GM12878 (cell line): ENCODE measurements at regions of chr11 and their contacts with region 1.

Region 1: DNA sequence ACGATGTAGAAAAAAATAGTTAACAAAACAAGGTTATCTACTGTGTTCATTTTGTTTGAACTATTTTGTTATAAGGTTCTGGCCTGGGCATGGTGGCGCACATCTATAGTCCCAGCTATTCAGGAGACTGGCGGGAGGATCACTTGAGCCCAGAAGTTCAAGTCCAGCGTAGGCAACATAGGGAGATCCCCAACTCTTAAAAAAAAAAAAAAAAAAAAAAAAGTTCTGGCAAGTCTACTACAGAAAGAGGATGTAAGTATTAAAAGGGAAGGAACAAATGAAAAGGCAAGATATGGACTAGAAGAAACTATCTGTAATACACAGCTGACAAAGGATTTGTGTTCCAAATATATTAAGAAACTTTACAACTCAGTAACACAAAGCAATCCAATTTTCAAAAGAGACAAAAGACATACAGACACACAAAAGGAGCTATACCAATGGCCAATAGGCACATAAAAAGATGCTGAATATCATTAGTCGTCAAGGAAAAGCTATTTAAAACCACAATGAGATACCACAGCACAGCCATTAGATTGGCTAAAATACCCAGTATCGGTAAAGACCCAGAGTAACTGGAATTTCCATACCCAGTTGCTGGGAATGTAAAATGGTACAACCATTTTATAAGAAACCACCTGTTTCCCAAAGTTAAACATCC is 27.4 kb downstream of the RRAS2 start:
- DNase-seq: no peak
- ATAC-seq: peak; percentile 77
- H3K4me3 ChIP-seq: peak overlapping the region; percentile 32; the same call in 1 of the 2 replicates
- H3K27ac ChIP-seq: peak overlapping the region; percentile 29; the same call in 1 of the 2 replicates
- H3K4me1 ChIP-seq: peaks cover 43% of the 10 kb centered on the region
- H3K27me3 ChIP-seq: no peaks in the 10 kb centered on the region
- CTCF ChIP-seq: no peak
- EP300 ChIP-seq: no peak
- POLR2A ChIP-seq: no peak
- RAD21 ChIP-seq: no peak

Region 2: GRCh38 chr11:13970986-13971385 is 360.6 kb before region 1 on chr11:
- CTCF ChIA-PET with region 1: no interaction called
- POLR2A ChIA-PET with region 1: interaction called, 10 read pairs
- RAD21 ChIA-PET with region 1: no interaction called
- SMC1A ChIA-PET with region 1: no interaction called
- in situ Hi-C with region 1: no loop called
- intact Hi-C with region 1: no loop called
- DNase-seq: no peak
- ATAC-seq: peak; percentile 65
- H3K4me3 ChIP-seq: no peak overlapping the region
- H3K27ac ChIP-seq: no peak overlapping the region
- H3K4me1 ChIP-seq: no peaks in the 10 kb centered on the region
- H3K27me3 ChIP-seq: peaks cover 1 to 4% of the 10 kb centered on the region in 2 experiments; a peak in 1 of 4 replicates
- CTCF ChIP-seq: peak; percentile 15 to 47 (median 30); a peak in 3 of 6 replicates
- EP300 ChIP-seq: no peak
- POLR2A ChIP-seq: no peak
- RAD21 ChIP-seq: 0 out of 2 replicates have a peak, but pooled peaks have one; percentile 19

Region 3: GRCh38 chr11:14202251-14203196 is 129.1 kb before region 1 on chr11:
- CTCF ChIA-PET with region 1: no interaction called
- POLR2A ChIA-PET with region 1: no interaction called
- RAD21 ChIA-PET with region 1: no interaction called
- SMC1A ChIA-PET with region 1: no interaction called
- in situ Hi-C with region 1: no loop called
- intact Hi-C with region 1: no loop called
- DNase-seq: peak; percentile 2
- ATAC-seq: peak; percentile 72
- H3K4me3 ChIP-seq: no peak overlapping the region
- H3K27ac ChIP-seq: no peak overlapping the region
- H3K4me1 ChIP-seq: peaks cover 3% of the 10 kb centered on the region; the same call in 1 of the 2 replicates
- H3K27me3 ChIP-seq: no peaks in the 10 kb centered on the region
- CTCF ChIP-seq: no peak
- EP300 ChIP-seq: no peak
- POLR2A ChIP-seq: no peak
- RAD21 ChIP-seq: no peak

Region 4: GRCh38 chr11:14320020-14320419 is 11.6 kb before region 1 on chr11:
- CTCF ChIA-PET with region 1: interaction called, 7 read pairs
- POLR2A ChIA-PET with region 1: interaction called, 5 read pairs
- RAD21 ChIA-PET with region 1: interaction called, 34 read pairs
- SMC1A ChIA-PET with region 1: interaction called, 89 read pairs
- in situ Hi-C with region 1: no loop called
- intact Hi-C with region 1: no loop called
- DNase-seq: peak; percentile 90
- ATAC-seq: peak; percentile 40
- H3K4me3 ChIP-seq: peak overlapping the region; percentile 57
- H3K27ac ChIP-seq: peak overlapping the region; percentile 69
- H3K4me1 ChIP-seq: peaks cover 30% of the 10 kb centered on the region
- H3K27me3 ChIP-seq: no peaks in the 10 kb centered on the region
- CTCF ChIP-seq: no peak
- EP300 ChIP-seq: peak in 1 of 2 experiments; percentile 58; a peak in 1 of 4 replicates
- POLR2A ChIP-seq: no peak
- RAD21 ChIP-seq: no peak

Region 5: GRCh38 chr11:14342906-14343305 is 11.3 kb after region 1 on chr11:
- CTCF ChIA-PET with region 1: interaction called, 9 read pairs
- POLR2A ChIA-PET with region 1: interaction called, 15 read pairs
- RAD21 ChIA-PET with region 1: interaction called, 5 read pairs
- SMC1A ChIA-PET with region 1: interaction called, 43 read pairs
- in situ Hi-C with region 1: no loop called
- intact Hi-C with region 1: no loop called
- DNase-seq: no peak
- ATAC-seq: peak; percentile 70
- H3K4me3 ChIP-seq: no peak overlapping the region
- H3K27ac ChIP-seq: peak overlapping the region; percentile 46; the same call in 1 of the 2 replicates
- H3K4me1 ChIP-seq: peaks cover 3% of the 10 kb centered on the region; the same call in 1 of the 2 replicates
- H3K27me3 ChIP-seq: no peaks in the 10 kb centered on the region
- CTCF ChIP-seq: no peak
- EP300 ChIP-seq: no peak
- POLR2A ChIP-seq: no peak
- RAD21 ChIP-seq: no peak

Region 6: DNA sequence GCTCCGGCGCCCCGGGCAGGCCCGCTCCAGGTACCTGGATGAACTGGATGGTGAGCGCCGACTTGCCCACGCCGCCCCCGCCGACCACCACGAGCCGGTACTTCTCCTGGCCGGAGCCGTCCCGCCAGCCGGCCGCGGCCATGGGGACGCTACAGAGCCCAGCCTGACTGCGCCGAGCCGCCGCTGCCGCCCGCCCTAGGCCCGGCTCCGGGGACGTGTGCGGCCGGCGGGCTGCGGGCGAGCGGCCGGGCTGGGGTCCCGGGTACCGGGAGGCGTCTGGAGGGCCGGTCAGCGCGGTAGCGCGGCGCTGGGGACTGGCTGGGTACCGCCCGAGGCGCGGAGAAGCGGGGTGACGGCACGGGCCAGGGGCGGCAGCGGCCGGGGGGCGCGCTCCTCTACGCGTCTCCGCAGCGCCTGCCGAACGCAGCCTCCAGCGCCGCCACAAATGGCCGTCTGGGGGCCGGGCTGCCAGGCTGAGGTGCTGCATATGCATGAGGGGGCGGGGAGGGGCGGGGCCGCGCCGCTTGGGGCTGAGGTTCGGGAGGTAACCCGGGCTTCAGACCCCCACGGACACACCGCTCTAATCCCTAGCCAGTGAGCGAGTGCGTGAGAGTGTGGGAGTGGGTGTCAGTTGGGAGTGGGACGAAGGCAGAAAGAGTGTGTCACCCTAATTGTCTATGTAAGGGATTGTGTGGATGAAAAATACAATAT is 27.3 kb after region 1 on chr11 and contains the start of gene RRAS2:
- CTCF ChIA-PET with region 1: interaction called, 3 read pairs
- POLR2A ChIA-PET with region 1: interaction called, 6 read pairs
- RAD21 ChIA-PET with region 1: interaction called, 6 read pairs
- SMC1A ChIA-PET with region 1: interaction called, 9 read pairs
- in situ Hi-C with region 1: no loop called
- intact Hi-C with region 1: loop called (anchors 2 kb)
- DNase-seq: no peak
- ATAC-seq: peak; percentile 88
- H3K4me3 ChIP-seq: peak within 1 kb of the TSS; percentile 90
- H3K27ac ChIP-seq: peak within 1 kb of the TSS; percentile 86
- H3K4me1 ChIP-seq: peaks cover 4% of the 10 kb centered on the region; the same call in 1 of the 2 replicates
- H3K27me3 ChIP-seq: no peaks in the 10 kb centered on the region
- CTCF ChIP-seq: 0 out of 6 replicates have a peak, but pooled peaks of 2 of the 3 experiments have one; percentile 6 to 11
- EP300 ChIP-seq: no peak
- POLR2A ChIP-seq: peak; percentile 92
- RAD21 ChIP-seq: 0 out of 2 replicates have a peak, but pooled peaks have one; percentile 14
- polyA plus RNA-seq, gene RRAS2: 26.9 to 33.3 TPM

Region 7: GRCh38 chr11:14506532-14506931 is 174.9 kb after region 1 on chr11:
- CTCF ChIA-PET with region 1: no interaction called
- POLR2A ChIA-PET with region 1: no interaction called
- RAD21 ChIA-PET with region 1: no interaction called
- SMC1A ChIA-PET with region 1: no interaction called
- in situ Hi-C with region 1: no loop called
- intact Hi-C with region 1: no loop called
- DNase-seq: no peak
- ATAC-seq: no peak
- H3K4me3 ChIP-seq: no peak overlapping the region
- H3K27ac ChIP-seq: no peak overlapping the region
- H3K4me1 ChIP-seq: no peaks in the 10 kb centered on the region
- H3K27me3 ChIP-seq: no peaks in the 10 kb centered on the region
- CTCF ChIP-seq: no peak
- EP300 ChIP-seq: no peak
- POLR2A ChIP-seq: no peak
- RAD21 ChIP-seq: no peak